ENCODE measurements at regions of chr3 and their contacts with region 1.

Region 1: GRCh38 chr3:132554437-132554836 is 42.6 kb upstream of the ACKR4 start:
- DNase-seq: no peak
- ATAC-seq: no peak
- H3K4me3 ChIP-seq: no peak overlapping the region
- H3K4me3 Mint-ChIP-seq: no peak overlapping the region
- H3K27ac ChIP-seq: no peak overlapping the region
- H3K27ac Mint-ChIP-seq: no peak overlapping the region
- H3K4me1 ChIP-seq: peaks cover 0 to 9% of the 10 kb centered on the region in 2 experiments
- H3K4me1 Mint-ChIP-seq: peaks cover 16% of the 10 kb centered on the region in 3 donors
- H3K27me3 ChIP-seq: no peaks in the 10 kb centered on the region
- H3K27me3 Mint-ChIP-seq: no peaks in the 10 kb centered on the region

Region 2: DNA sequence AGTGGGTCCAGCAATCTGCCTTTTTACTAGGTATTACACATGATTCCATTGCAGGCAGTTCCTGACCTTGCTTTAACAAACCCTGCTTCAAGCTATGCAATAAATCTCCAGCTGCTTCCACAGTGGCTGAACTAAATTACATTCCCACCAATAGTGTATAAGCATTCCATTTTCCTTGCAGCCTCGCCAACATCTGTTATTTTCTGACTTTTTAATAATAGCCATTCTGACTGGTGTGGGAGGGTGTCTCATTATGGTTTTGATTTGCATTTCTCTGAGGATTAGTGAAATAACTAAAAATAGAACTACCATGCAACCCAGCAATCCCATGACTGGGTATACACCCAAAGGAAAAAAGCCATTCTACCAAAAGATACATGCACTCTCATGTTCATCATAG is 173.5 kb before region 1 on chr3:
- CTCF ChIA-PET with region 1: no interaction called
- POLR2A ChIA-PET with region 1: no interaction called
- DNase-seq: no peak
- ATAC-seq: no peak
- H3K4me3 ChIP-seq: no peak overlapping the region
- H3K4me3 Mint-ChIP-seq: no peak overlapping the region
- H3K27ac ChIP-seq: no peak overlapping the region
- H3K27ac Mint-ChIP-seq: no peak overlapping the region
- H3K4me1 ChIP-seq: no peaks in the 10 kb centered on the region
- H3K4me1 Mint-ChIP-seq: no peaks in the 10 kb centered on the region
- H3K27me3 ChIP-seq: peaks cover 0 to 19% of the 10 kb centered on the region in 2 experiments
- H3K27me3 Mint-ChIP-seq: peaks cover 32% of the 10 kb centered on the region in 2 donors

Region 3: DNA sequence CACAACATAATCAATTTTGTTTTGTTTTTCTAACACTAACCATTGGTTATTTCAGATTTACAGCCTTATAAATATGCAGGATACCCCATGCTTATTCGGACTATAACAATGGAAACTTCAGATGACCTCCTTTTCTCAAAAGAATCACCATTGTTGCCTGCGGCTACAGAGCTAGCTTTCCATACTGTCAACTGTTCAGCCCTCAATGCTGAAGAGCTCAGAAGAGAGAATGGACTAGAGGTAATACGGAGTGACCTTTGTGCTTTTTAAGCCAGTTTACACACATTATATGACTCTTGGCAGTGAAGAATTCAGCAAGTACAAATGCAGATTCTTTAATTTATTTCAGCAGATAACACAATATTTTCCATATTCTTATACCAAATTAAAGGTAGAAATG is 55.4 kb before region 1 on chr3:
- CTCF ChIA-PET with region 1: no interaction called
- POLR2A ChIA-PET with region 1: no interaction called
- DNase-seq: no peak
- ATAC-seq: no peak
- H3K4me3 ChIP-seq: no peak overlapping the region
- H3K4me3 Mint-ChIP-seq: no peak overlapping the region
- H3K27ac ChIP-seq: no peak overlapping the region
- H3K27ac Mint-ChIP-seq: no peak overlapping the region
- H3K4me1 ChIP-seq: no peaks in the 10 kb centered on the region
- H3K4me1 Mint-ChIP-seq: no peaks in the 10 kb centered on the region
- H3K27me3 ChIP-seq: no peaks in the 10 kb centered on the region
- H3K27me3 Mint-ChIP-seq: no peaks in the 10 kb centered on the region

Region 4: GRCh38 chr3:132569153-132569552 is 14.7 kb after region 1 on chr3:
- CTCF ChIA-PET with region 1: interaction called in 1 of 2 experiments, 3 read pairs
- POLR2A ChIA-PET with region 1: interaction called in 1 of 2 experiments, 12 read pairs
- DNase-seq: no peak
- ATAC-seq: no peak
- H3K4me3 ChIP-seq: no peak overlapping the region
- H3K4me3 Mint-ChIP-seq: no peak overlapping the region
- H3K27ac ChIP-seq: no peak overlapping the region
- H3K27ac Mint-ChIP-seq: no peak overlapping the region
- H3K4me1 ChIP-seq: no peaks in the 10 kb centered on the region
- H3K4me1 Mint-ChIP-seq: no peaks in the 10 kb centered on the region
- H3K27me3 ChIP-seq: no peaks in the 10 kb centered on the region
- H3K27me3 Mint-ChIP-seq: no peaks in the 10 kb centered on the region